Activated T-helper 2 cell treated with anti-CD3 and anti-CD28 coated beads, Interferon-gamma antibody, Interleukin-2, Interleukin-4, amounts not matched to agents 10 μg/mL and 5 μg/mL and 100 μg/mL, durations not matched to agents 14 hours and 24 hours and 36 hours (primary cell): ENCODE measurements at regions of chr12 and their contacts with region 1.

Region 1: DNA sequence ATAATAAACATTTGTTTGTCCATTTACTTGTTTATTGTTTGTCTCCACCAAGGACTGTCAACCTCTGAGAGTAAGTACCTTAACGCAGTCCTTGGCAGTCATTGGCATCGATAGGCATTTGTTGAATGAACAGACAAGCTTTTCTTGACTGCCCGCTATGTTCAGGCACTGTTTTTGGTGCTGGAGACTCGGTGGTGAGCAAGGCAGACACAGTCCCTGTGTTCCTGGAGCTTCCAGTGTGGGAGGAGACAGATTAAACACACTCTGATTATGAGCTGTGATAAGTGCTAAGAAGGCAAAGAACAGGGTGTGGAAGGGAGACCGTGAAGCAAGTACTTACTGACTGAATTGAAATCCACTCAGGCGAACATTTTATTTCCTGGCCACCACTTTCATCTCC is 1.2 kb downstream of the ATP6V0A2 start:
- DNase-seq: no peak
- H3K4me3 Mint-ChIP-seq: peak overlapping the region; percentile 89
- H3K27ac Mint-ChIP-seq: peak overlapping the region; percentile 88
- H3K4me1 Mint-ChIP-seq: peaks cover 34% of the 10 kb centered on the region
- H3K27me3 Mint-ChIP-seq: no peaks in the 10 kb centered on the region

Region 2: DNA sequence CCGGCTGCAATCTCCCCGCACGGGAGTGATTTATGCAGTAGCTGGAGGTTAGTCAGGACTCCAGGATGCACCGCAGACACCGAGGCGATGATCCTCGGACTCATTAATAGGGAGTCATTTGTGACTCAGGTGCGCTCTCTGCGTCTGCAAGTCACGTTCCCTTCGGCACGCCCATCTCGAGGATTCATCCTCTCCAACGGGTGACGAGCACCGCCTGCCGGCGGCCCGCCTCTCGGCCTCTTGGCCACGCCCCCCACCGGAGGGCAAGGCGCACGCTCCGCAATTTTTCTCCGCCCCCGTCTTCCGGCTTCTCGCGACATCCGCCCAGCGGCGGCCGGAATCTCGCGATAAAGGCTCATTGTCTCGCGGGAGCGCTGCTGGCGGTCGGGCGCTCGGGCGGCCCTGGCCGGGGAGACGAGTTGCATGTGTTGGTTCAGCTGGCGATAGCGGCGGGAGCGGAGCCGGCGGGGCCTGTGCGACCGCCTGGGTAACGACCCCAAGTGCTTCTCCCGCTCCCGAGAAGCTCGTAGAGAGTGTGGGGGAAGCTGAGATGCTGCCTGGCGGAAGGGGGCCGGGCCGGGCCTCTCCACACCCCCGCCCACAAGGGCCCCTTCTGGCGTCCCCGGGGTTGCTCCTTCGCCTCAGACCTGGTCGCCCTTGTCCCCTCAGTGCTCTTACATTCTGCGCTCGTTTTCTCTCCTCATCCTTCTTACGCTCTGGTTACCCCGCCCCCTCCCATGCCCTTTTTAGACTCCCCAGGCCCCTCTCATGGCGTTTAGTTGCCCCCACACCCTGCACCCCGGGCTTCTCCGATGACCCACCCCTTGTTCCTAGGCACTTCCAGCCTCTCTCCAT is 960.7 kb before region 1 on chr12 and contains the start of gene DENR:
- intact Hi-C with region 1: no loop called
- DNase-seq: peak; percentile 99
- H3K4me3 Mint-ChIP-seq: peak within 1 kb of the TSS; percentile 89
- H3K27ac Mint-ChIP-seq: peak within 1 kb of the TSS; percentile 90
- H3K4me1 Mint-ChIP-seq: peaks cover 42% of the 10 kb centered on the region
- H3K27me3 Mint-ChIP-seq: no peaks in the 10 kb centered on the region
- total RNA-seq, gene DENR: 76.7 and 79.6 TPM in 2 replicates

Region 3: DNA sequence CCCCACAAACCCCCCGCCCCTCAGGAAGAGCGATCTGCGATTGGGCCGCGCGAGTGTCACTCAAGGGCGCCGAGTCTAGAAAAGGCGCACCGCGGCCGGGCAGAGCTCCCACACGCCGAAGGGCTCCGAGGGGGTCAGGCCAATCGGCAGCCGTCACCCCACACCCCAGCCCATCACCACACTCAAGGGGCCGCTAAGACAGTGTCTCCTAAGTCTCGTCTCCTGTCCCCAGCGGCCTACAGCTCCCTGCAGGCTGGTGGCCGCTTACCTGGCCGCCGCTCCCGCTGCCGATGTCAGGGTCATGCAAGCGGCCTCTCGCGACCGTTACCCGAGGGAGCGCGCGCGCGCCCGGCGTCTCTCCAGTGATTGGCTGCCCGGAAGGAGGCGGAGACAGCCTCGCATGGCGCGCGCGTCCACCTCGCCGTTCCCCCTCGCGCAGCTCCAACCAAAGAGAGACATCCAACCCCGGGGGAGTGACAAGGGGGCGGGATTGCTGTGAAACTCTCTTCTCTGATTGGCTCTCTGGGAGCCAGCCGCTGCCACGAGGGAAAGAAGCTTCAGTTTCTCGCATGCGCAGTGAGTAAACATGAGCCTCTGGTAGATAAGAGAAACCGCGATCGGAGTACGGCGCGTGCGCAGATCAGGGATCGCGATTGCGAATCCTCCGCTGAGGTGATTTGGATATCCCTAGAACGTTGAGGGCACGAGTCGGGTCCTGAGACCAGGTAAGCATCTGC is 480.4 kb before region 1 on chr12 and contains the starts of genes MPHOSPH9 and MTRFR:
- intact Hi-C with region 1: loop called (anchors 10 kb)
- DNase-seq: peak; percentile 99
- H3K4me3 Mint-ChIP-seq: peak within 1 kb of the TSS; percentile 96
- H3K27ac Mint-ChIP-seq: peak within 1 kb of the TSS; percentile 91
- H3K4me1 Mint-ChIP-seq: peaks cover 50% of the 10 kb centered on the region
- H3K27me3 Mint-ChIP-seq: no peaks in the 10 kb centered on the region
- total RNA-seq, gene MPHOSPH9: 97.0 and 99.7 TPM in 2 replicates
- total RNA-seq, gene MTRFR: 28.9 and 31.1 TPM in 2 replicates

Region 4: DNA sequence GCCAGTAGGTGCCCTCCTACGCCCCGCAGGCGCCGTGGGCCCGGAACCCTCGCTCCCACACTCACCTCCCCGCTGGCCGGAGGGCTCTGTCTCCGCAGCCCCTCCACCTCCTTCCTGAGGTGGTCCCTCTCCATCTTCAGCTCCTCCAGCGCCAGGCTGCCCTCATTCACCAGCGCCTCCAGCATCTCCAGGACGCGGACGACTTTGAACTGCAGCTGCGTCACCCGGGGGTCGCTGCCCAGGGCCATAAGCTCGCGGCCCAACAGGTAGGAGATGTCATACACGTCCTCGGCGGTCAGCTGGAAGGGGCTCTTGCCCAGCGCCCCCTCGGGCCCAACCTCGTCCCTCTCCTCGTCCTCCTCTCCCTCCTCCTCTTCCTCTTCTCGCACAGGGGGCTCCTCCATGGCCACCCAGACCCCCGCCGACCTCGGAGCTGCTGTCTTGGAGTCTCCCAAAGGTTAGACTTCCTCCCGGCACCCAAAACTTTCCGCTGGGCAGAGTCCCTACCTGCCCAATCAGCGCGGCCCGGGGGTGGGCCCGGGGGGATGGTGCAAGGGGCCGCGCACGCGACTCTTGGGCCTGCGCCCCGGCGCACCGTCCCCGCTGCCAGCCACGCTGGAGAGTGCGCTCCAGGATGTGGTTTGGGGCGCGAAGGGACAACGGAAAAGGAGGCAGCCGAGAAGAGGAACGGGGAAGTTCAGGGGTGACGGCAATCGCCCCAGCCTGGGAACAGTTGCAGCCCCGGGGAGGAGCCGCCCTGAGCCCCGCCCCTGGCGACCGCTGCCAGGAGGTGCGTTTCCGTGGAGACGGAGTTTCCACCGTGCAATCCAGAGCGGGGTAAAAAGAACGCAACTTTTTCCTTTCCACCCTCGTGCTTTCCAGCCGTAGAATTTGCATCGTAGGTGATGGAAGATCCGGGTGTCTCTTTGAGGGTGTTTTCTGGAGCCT is 277.1 kb before region 1 on chr12 and contains the start of gene RILPL2:
- intact Hi-C with region 1: loop called (anchors 10 kb)
- DNase-seq: peak; percentile 91
- H3K4me3 Mint-ChIP-seq: peak within 1 kb of the TSS; percentile 100
- H3K27ac Mint-ChIP-seq: peak within 1 kb of the TSS; percentile 99
- H3K4me1 Mint-ChIP-seq: peaks cover 39% of the 10 kb centered on the region
- H3K27me3 Mint-ChIP-seq: no peaks in the 10 kb centered on the region
- total RNA-seq, gene RILPL2: 15.7 and 16.3 TPM in 2 replicates

Region 5: DNA sequence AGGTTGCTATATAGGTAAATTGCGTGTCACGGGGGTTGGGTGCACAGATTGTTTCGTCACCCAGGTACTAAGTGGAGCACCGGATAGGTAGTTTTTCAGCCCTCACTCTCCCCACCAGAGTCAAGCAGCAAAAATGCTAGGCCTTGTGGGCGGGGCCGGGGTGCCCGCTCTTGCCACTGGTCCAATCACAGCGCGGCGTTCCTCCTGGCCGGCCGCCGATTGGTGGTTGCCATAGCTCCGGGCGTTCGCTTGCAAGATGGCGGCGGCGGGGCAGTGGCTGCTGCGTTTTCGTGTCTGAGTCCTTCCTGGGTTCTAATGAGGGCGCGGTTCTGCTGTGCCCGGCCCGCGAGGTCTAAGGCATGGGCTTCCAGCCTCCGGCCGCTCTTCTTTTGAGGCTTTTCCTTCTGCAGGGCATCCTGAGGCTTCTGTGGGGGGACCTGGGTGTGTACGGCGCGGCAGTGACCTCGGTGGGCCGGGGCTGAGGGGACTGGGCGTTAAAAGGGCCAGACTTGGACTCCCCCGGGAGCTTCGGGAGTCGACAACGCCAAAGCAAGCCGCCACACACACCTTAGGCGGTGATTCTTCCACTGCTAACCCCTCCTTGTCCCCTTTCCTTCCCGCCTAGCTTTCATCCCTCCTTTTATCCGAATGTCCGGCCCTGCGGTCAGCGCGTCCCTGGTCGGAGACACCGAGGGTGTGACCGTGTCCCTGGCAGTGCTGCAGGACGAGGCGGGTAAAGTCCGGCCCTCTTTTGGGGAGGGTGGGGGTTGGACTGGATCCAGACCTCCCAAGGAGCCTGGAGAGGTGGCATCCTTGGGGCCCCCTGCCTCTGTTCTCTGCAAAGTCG is 42.3 kb before region 1 on chr12 and contains the start of gene TCTN2:
- intact Hi-C with region 1: loop called (anchors 2 kb)
- DNase-seq: peak; percentile 93
- H3K4me3 Mint-ChIP-seq: peak within 1 kb of the TSS; percentile 82
- H3K27ac Mint-ChIP-seq: no peak within 1 kb of the TSS
- H3K4me1 Mint-ChIP-seq: peaks cover 6% of the 10 kb centered on the region
- H3K27me3 Mint-ChIP-seq: no peaks in the 10 kb centered on the region
- total RNA-seq, gene TCTN2: 3.0 and 3.3 TPM in 2 replicates

Region 6: DNA sequence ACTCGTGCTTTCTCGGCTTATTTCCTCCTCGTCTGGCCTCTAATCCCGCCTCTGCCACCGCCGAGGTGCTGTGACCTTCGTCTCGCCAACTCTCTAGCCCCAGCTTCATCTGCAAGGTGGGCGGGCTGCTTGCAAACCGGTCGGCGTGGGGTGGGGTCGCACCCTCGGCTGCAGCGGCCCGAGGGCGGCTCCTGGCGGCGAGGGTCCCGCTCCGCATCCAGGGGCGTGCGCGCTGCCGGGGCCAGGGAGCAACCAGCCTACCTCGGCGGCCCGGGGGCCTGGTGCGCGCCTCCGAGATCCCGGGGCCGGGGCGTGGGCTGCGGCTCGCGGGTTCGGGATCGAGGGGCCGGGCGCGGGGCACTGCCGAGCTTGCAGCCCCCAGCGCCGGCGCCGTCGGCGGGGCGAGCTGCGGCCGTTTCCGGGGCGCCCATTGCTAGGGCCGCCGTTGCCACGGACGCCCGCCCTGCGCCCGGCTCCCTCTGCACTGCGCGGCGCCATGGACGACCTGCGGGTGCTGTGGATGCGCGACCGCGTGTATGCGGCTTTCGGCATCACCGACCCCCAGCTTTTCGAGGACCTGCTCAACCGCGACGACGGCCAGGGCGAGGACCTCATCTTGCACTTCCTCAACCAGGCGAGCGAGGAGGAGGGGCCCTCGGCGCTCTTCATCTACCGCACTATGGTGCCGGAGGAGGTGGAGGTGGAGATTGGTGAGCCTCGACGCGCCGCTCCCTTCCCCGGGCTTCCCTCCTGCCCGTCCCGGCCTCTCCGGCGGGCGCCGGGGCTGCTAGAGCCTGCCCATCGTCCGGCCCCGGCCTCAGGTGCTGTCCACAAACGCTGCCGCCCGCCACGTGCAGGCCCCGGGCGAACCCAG is 48.7 kb after region 1 on chr12 and contains the start of gene DNAH10:
- intact Hi-C with region 1: loop called (anchors 10 kb)
- DNase-seq: no peak
- H3K4me3 Mint-ChIP-seq: peak within 1 kb of the TSS; percentile 71
- H3K27ac Mint-ChIP-seq: no peak within 1 kb of the TSS
- H3K4me1 Mint-ChIP-seq: peaks cover 6% of the 10 kb centered on the region
- H3K27me3 Mint-ChIP-seq: peaks cover under 1% of the 10 kb centered on the region
- total RNA-seq, gene DNAH10: 0.25 and 0.41 TPM in 2 replicates

Region 7: DNA sequence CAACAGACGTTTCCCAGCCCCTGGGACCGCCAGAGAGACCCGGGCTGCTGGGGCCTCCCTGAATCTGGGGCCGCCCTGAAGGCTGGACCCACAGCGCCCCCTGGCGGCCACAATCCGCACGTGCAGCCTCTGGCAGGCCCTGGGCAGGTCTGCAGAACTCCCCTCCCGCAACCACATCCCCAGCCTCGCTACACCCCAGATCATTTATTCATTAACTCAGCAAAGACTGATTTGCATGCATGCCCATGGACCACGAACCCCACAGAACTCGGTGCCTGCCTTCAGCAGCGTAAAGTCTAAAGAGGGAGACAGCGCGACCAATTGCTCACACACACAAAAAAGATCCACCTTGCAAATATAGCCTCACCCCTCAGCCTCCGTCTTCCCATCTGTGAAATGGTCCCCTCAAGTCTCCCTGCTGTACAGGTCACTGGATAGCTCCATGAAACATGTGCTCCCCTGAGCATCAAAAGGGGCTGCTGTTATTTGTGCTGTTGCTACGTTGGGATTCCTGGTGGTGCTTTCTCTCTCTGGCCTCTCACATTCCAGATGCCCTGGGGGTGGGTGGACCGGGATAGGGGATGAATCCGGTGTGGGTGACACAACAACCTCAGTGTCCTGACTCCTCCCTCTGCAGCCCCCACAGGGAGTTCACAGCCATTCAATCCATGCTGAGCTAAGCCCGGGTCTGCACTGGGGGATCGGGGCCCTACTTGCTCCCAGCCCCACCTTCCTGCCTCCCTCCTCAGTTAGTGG is 1053.8 kb after region 1 on chr12:
- intact Hi-C with region 1: loop called (anchors 5 kb)
- DNase-seq: peak; percentile 73
- H3K4me3 Mint-ChIP-seq: no peak overlapping the region
- H3K27ac Mint-ChIP-seq: no peak overlapping the region
- H3K4me1 Mint-ChIP-seq: peaks cover 23% of the 10 kb centered on the region
- H3K27me3 Mint-ChIP-seq: peaks cover 24% of the 10 kb centered on the region